HAP-1 (cell line): ENCODE measurements at regions of chr5 and their contacts with region 1.

Region 1: DNA sequence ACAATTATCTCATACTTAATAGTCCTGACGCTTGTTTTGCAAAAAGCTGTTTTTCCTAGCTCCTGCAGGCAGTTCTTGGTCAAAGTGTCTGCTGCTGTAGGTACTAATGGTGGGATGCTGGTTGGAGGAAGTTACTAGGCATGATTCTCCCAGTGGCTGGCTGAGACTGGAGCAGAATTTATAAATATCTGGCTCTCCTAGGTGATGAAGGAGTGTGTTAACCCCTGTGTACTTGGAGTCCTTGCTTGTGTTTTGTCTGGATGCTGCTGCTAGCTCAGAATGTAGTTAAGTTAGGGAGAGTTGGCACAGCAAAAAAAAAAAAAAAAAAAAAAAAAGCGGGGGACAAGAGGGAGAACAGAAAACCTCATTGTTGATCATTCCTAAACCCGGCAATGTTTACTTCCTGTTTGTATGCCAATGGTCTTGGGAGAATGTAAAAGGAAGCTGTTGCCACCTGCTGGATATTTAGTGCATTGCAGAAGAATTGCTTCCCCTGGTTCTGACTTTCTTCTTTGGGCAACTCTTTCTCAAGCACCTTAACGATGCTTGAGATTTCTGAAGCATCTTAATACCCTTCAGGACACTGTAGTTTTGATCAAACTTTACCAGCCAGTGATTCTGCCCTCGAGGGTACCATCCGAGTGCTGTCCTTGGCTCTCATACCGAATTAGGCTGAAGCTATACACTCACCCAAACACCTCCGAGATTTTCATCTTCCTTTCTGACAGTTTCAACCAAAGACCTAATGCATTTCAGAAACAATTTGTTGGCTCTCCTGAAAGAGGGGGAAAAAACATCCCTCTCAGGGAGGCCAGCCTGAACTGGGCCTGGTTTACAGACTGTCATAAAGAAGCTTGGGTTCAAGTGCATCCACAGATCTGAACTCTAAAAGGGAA is 71.7 kb upstream of the WWC1 start:
- DNase-seq: peak; percentile 65 to 74
- H3K4me3 ChIP-seq: no peak overlapping the region
- H3K4me1 ChIP-seq: no peaks in the 10 kb centered on the region
- H3K27me3 ChIP-seq: peaks cover 10% of the 10 kb centered on the region; the same call in 1 of the 2 replicates

Region 2: DNA sequence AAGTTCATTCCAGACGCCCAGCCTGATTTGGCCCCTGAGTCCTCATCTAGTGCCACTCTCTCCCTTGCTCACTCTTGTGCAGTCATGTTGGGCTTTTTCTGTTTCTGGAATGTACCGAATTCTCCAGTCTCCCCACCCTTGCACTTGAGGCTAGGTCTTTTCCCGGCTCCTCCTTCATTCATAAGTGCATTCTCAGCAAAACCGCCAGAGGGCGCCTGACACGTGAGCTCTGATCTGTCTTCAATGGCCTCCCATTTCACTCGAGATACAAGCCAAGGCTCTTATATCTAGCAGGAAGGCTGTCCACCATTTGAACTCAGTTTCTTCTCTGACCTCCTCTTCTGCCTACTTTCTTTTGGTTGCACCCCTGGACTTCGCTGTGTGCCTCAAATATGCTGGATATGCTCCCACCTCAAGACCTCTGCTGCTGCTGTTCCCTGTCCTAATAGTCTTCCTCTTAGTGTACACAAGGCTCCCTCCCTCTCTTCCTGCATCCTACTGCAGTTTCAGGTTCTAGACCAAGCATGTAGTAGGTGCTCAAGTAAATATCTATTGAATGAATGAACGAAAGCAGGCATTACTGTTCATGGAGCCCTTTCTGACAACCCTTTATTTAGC is 496.4 kb before region 1 on chr5:
- in situ Hi-C with region 1: loop called (anchors 10 kb)
- DNase-seq: peak; percentile 67 to 83
- H3K4me3 ChIP-seq: no peak overlapping the region
- H3K4me1 ChIP-seq: peaks cover 20% of the 10 kb centered on the region
- H3K27me3 ChIP-seq: peaks cover 35% of the 10 kb centered on the region

Region 3: DNA sequence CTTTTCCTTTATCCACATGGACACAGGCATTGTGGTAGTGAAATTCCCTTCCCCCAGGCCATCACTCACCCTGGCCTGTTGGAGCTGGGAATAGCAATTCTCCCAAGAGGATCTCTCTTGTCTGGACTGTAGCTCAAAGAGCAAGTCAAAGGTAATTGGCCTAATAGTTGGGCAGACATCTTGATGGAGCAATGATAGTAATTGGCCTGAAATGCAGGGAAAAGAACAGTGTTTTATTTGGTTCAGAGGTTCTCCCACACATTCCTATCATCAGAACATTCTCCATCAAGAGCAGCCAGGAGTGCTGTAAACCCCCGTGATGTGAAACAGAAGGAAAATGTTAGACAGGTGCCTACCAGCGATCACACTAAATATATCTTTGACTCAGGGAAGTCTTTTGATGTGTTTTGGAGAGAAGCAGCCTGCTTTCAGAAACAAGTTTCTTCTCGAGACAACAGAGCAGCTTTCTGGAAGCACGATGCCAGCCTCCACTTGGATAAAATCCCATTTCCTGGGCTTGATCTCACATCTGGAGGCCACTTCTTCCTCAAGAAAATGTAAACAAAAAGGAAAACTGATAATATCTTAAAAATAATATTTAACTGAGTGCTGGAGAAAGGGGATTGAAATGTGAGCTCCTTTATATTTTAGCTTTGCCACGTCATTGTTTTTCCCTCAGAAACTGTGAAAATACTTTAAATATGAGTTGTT is 126.4 kb before region 1 on chr5:
- in situ Hi-C with region 1: no loop called
- DNase-seq: no peak
- H3K4me3 ChIP-seq: no peak overlapping the region
- H3K4me1 ChIP-seq: no peaks in the 10 kb centered on the region
- H3K27me3 ChIP-seq: peaks cover 4% of the 10 kb centered on the region

Region 4: GRCh38 chr5:168114444-168115017 is 105.2 kb before region 1 on chr5:
- in situ Hi-C with region 1: loop called (anchors 5 kb)
- DNase-seq: peak; percentile 69 to 84
- H3K4me3 ChIP-seq: no peak overlapping the region
- H3K4me1 ChIP-seq: peaks cover 12% of the 10 kb centered on the region
- H3K27me3 ChIP-seq: peaks cover 3% of the 10 kb centered on the region; the same call in 1 of the 2 replicates